ENCODE measurements at regions of chr1 and their contacts with region 1.

Region 1: DNA sequence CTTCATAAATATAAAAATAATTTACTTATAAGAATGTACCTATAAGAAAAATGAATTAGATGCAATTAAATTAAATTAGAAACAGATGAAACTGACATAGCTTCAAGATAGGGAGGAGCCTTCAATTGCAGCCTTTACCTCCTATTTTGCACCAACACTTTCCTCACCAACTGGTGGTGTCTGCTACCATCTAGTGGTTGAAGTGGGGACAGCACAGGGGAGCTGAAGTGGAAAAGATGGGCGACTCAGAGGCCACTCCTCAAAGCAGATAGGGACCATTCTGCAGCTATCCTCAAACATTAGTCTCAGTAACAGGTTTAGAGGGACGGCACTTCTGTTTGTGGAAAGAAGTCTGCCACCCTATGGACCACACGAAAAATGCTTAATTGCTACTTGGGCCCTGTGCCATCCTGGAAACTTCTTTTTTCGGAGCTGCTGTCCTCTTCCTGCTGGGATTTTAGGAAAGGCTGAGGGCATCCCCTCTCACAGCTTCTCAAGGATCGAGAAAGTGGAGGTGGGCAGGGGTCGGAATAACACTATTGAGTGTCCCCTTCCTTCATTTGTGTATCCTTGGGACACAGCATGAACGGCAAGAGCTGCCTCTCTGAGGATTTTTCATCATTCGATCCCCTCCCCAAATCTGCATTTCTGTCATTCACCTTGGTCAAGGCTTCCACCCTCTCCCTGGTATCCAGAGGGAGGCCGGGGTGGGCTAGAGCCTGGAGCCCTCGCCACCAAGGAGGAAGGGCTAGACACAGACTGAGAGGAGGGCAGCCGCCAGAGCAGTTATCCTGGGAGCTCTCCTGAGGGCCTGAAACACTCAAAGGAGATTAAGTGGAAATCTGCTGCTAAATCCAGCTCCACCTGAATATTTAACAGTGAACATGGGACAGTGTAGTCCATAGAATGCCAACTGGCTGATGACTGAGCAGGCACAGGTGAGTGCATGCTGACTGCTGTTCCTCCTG is 9.6 kb downstream of the PROK1 start:
- DNase-seq: peak; percentile 90
- H3K4me3 ChIP-seq: no peak overlapping the region
- H3K27ac ChIP-seq: no peak overlapping the region
- H3K4me1 ChIP-seq: no peaks in the 10 kb centered on the region
- H3K27me3 ChIP-seq: no peaks in the 10 kb centered on the region
- CTCF ChIP-seq: peak; percentile 98

Region 2: GRCh38 chr1:110196917-110197765 is 263.4 kb before region 1 on chr1:
- CTCF ChIA-PET with region 1: interaction called, 26 read pairs
- POLR2A ChIA-PET with region 1: no interaction called
- intact Hi-C with region 1: loop called (anchors 1 kb)
- DNase-seq: peak; percentile 55
- H3K4me3 ChIP-seq: no peak overlapping the region
- H3K27ac ChIP-seq: no peak overlapping the region
- H3K4me1 ChIP-seq: peaks cover 7% of the 10 kb centered on the region
- H3K27me3 ChIP-seq: no peaks in the 10 kb centered on the region
- CTCF ChIP-seq: peak; percentile 93

Region 3: DNA sequence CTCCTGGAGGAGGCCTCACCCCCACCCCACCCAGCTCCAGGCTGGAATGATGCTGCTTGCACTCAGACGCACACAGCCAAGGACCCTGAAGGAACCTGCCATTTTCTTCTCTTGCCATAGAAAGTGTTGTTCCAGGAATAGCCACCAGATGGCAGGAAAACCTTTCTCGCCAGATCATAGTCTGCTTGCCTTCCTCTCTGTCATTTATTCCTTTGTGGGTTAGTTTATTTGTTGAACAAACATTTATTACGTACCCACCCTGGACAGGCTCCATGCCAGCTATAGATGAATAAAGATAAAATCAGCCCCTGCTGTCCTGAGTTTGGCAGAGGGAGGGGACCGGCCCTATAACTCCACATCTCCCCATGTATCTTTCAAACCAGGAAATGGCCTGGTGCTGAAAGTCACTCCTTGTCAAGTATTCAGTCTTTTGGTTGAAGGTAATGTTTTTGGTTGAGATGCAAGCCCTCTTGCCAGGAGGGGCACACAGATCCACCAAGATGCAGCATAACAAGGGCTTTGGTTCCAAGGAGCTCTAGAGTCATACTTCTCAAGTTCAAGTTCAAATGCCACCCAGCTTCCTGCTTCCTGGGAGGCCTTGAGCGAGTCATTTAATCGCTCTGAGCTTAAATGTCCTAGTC is 257.4 kb before region 1 on chr1:
- CTCF ChIA-PET with region 1: interaction called, 46 read pairs
- POLR2A ChIA-PET with region 1: no interaction called
- intact Hi-C with region 1: loop called (anchors 1 kb)
- DNase-seq: peak; percentile 79
- H3K4me3 ChIP-seq: no peak overlapping the region
- H3K27ac ChIP-seq: no peak overlapping the region
- H3K4me1 ChIP-seq: peaks cover 7% of the 10 kb centered on the region
- H3K27me3 ChIP-seq: no peaks in the 10 kb centered on the region
- CTCF ChIP-seq: peak; percentile 86

Region 4: DNA sequence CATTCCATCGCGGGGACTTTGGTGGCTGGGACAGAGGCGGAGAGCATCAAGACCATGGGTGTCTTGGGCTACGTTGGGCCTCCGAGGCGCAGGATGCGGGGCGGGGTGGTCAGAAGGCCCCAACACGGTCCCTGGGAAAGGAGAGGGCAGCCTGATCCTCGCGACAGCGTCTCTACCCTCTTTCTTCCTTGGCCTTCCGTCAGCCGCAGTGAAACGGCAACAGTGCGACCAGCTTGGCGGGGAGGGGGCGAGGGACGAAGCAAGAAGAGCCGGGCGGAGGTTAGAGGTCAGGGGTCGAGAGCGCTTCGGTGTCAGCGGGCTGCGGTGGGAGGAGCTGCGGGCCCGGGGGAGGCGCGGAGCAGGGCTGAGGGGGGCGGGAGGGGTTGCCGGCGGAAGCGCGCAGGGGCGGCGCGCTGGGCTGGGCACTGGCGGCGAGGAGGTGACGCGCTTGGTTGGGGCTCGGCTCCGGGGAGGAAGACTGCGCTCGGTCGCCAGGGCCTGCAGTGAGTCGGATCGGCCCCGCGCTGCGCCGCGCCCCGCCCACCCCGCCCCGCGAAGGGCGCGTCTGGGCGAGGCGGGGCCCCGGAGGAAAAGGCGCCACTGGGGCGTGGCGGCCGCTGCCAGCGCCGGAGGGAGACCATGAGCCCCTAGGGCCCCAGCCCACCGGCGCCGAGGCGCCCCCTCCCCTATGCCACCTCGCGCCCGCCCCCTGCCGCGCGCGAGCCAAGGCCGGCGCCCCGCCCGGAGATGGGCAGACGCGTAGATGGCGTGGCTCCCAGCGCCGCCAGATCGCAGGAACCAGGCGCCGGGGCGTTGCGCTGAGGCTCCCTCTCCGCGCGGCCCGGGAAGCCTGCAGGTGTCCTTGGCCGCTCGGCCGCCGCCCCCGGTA is 250.6 kb before region 1 on chr1 and contains the start of gene KCNC4:
- CTCF ChIA-PET with region 1: interaction called, 46 read pairs
- POLR2A ChIA-PET with region 1: no interaction called
- intact Hi-C with region 1: loop called (anchors 1 kb)
- DNase-seq: peak; percentile 79
- H3K4me3 ChIP-seq: peak within 1 kb of the TSS; percentile 52
- H3K27ac ChIP-seq: no peak within 1 kb of the TSS
- H3K4me1 ChIP-seq: peaks cover 14% of the 10 kb centered on the region
- H3K27me3 ChIP-seq: peaks cover 42% of the 10 kb centered on the region
- CTCF ChIP-seq: no peak
- total RNA-seq, gene KCNC4: 0.22 and 0.24 TPM in 2 replicates

Region 5: DNA sequence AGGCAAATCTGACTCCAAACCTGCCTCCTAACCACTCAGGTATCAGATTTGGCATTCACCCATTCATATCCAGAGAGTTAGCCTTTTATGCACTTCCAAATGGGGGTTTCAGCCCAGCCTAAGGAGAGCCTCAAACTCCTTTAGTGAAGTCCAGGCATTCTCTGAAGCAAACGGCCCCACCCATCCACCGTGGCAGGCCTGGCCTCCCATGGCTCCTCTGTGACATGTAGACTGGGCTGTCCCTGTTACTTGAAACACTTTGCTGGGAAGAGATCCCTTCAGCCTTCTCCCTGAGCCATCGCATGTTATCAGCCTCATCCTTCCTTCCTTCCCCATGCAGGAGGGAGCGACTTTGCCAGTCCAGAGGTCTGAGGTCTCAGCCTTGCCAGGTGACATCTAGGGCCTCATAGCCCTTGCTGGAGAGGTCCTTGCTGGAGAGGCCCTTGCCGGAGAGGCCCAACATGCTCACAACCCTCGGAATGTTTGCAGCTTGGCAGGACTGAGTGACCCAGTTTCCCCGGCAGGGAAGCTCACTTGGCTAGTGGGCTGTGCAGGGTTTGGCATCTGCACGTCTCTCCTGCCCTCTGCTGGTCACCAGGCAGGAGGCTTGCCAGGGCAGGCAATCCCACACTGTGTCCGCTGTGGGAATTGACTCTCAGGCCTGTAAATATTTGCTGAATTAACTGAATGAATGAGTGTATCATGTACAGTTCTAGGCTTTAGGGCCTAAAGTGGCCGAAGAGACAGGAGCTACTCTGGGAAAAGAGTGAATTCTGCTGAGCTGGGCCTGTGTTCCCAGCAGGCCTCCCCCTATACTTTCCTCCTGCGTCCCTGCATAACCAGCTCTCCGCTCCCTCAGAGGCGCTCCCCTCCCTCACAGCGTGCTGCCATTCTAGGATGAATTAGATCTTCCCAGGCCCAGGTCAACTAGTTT is 148.1 kb before region 1 on chr1:
- CTCF ChIA-PET with region 1: interaction called, 3 read pairs
- POLR2A ChIA-PET with region 1: no interaction called
- intact Hi-C with region 1: loop called (anchors 10 kb)
- DNase-seq: peak; percentile 75
- H3K4me3 ChIP-seq: no peak overlapping the region
- H3K27ac ChIP-seq: no peak overlapping the region
- H3K4me1 ChIP-seq: no peaks in the 10 kb centered on the region
- H3K27me3 ChIP-seq: no peaks in the 10 kb centered on the region
- CTCF ChIP-seq: peak; percentile 89

Region 6: DNA sequence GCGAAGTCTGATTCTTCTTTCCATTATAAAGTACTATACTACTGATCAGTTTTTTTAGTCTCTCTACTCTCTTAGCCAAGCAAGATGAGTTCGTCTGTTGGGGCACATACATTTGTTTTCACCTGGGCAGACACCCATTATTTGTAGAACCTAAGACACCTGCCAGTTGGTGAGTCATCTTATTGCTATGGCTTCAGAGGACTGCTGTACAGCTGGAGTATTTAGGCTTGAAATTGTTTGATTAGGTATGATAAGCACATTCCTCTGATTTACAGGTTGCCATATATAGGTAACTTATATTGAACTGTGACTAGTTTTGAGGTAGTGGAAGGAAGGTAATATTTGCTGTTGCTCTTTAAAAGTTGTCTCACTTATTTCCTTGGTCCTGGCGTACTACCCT is 104.1 kb before region 1 on chr1:
- CTCF ChIA-PET with region 1: no interaction called
- POLR2A ChIA-PET with region 1: no interaction called
- intact Hi-C with region 1: no loop called
- DNase-seq: no peak
- H3K4me3 ChIP-seq: no peak overlapping the region
- H3K27ac ChIP-seq: no peak overlapping the region
- H3K4me1 ChIP-seq: peaks cover 7% of the 10 kb centered on the region
- H3K27me3 ChIP-seq: no peaks in the 10 kb centered on the region
- CTCF ChIP-seq: no peak

Region 7: GRCh38 chr1:110412576-110412975 is 48.0 kb before region 1 on chr1:
- CTCF ChIA-PET with region 1: interaction called, 20 read pairs
- POLR2A ChIA-PET with region 1: interaction called, 3 read pairs
- intact Hi-C with region 1: loop called (anchors 1 kb)
- DNase-seq: peak; percentile 77
- H3K4me3 ChIP-seq: no peak overlapping the region
- H3K27ac ChIP-seq: no peak overlapping the region
- H3K4me1 ChIP-seq: peaks cover 7% of the 10 kb centered on the region
- H3K27me3 ChIP-seq: peaks cover 21% of the 10 kb centered on the region
- CTCF ChIP-seq: peak; percentile 77

Measured in A673 (cell line).